ENCODE measurements at regions of chr17 and their contacts with region 1.

Region 1: DNA sequence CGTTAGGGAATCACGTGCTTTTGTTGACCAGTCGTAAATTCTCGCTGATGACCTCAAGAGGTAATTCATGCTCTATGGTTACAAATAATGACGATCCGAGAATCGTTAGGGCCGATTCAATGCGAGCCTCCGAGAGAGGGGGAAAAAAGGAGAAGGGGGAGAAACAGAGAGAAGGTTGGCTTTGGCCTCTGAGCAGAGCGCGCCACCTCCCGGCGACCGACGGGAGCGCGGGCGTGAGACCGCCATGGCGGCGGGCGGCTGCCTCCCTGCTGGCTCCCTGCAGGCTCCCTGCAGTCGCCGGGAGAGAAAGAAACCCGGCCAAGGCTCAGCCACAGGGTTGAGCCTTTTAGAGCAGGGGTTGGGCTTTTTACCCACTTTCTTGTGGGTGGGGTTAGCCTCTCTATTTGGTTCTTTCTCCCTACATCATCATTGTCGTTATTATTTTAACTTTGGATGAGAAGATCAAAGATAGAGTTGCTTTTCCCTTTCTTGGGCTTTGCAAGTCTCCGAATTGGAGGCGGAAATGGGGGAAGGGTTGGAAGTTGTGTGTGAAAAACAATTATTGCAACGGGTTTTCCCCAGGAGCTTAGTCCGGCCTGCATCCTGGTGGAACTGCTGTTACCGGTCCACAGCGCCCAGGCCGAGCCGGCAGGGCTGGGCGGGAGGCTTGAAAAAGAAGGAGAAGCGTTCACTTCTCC is 410 bp upstream of the HOXB5 start:
- DNase-seq: peak; percentile 86
- ATAC-seq: peak; percentile 65
- H3K4me3 Mint-ChIP-seq: peak overlapping the region; percentile 76
- H3K27ac Mint-ChIP-seq: peak overlapping the region; percentile 23
- H3K4me1 Mint-ChIP-seq: peaks cover 44% of the 10 kb centered on the region
- H3K27me3 Mint-ChIP-seq: peaks cover 76% of the 10 kb centered on the region

Region 2: DNA sequence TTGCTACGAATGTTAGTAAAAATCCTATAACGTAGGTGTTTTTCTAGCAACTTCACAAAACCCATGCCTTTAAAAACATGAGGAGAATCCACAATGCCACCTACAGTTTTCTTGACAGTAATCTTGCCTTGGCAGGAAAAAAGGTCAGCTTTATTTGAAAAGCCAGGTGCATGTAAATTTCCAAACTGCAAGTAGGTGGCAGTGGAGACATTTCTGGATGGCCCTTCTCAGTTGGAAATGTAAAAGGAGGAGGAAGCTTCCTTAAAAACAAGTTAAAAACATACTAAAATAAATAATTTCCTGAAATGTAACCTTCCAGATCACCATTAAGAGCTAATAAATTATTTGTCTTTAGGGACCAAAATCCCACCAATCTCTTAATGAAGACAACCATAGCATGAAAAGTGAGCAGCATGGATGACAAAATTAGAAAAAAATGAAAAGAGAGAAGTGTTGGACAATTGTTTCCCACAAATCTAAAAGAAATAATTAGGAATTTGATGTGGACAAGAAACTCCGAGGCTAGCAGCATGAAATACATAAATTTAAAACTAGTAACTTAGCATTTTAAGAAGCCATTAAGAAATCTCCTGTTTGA is 334.2 kb before region 1 on chr17:
- CTCF ChIA-PET with region 1: interaction called, 60 read pairs
- POLR2A ChIA-PET with region 1: no interaction called
- DNase-seq: no peak
- ATAC-seq: no peak
- H3K4me3 Mint-ChIP-seq: no peak overlapping the region
- H3K27ac Mint-ChIP-seq: no peak overlapping the region
- H3K4me1 Mint-ChIP-seq: peaks cover 9% of the 10 kb centered on the region
- H3K27me3 Mint-ChIP-seq: no peaks in the 10 kb centered on the region

Region 3: GRCh38 chr17:48322060-48322459 is 271.9 kb before region 1 on chr17:
- CTCF ChIA-PET with region 1: interaction called, 18 read pairs
- POLR2A ChIA-PET with region 1: no interaction called
- DNase-seq: no peak
- ATAC-seq: no peak
- H3K4me3 Mint-ChIP-seq: no peak overlapping the region
- H3K27ac Mint-ChIP-seq: no peak overlapping the region
- H3K4me1 Mint-ChIP-seq: no peaks in the 10 kb centered on the region
- H3K27me3 Mint-ChIP-seq: no peaks in the 10 kb centered on the region

Region 4: DNA sequence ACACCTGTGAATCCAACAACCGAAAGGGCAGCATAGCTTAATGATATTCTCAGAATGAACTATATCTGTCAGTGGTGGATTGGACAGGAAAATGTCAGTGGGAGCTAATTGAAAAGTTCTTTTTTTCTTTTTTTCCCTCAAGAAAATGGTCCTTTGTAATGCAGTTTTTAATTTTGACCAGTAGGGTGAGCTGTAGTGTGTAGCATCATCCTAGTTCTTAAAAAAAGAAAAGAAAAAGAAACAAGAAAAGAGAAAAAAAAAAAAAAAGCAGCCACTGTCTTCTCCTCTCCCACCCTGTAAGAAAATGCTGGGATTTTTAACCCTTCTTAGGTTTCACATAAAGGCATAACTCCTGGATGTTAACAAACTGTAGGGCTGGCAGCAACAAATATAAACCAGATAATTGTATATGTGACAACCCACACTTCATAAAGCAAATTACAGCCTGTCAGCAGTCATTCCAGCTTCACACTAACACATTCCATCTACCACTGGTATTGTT is 242.1 kb before region 1 on chr17:
- CTCF ChIA-PET with region 1: interaction called, 59 read pairs
- POLR2A ChIA-PET with region 1: interaction called, 3 read pairs
- DNase-seq: no peak
- ATAC-seq: no peak
- H3K4me3 Mint-ChIP-seq: peak overlapping the region; percentile 10
- H3K27ac Mint-ChIP-seq: no peak overlapping the region
- H3K4me1 Mint-ChIP-seq: peaks cover 14% of the 10 kb centered on the region
- H3K27me3 Mint-ChIP-seq: no peaks in the 10 kb centered on the region

Region 5: GRCh38 chr17:48441231-48441711 is 152.7 kb before region 1 on chr17:
- CTCF ChIA-PET with region 1: no interaction called
- POLR2A ChIA-PET with region 1: no interaction called
- DNase-seq: peak; percentile 71
- ATAC-seq: peak; percentile 65
- H3K4me3 Mint-ChIP-seq: peak overlapping the region; percentile 69
- H3K27ac Mint-ChIP-seq: peak overlapping the region; percentile 93
- H3K4me1 Mint-ChIP-seq: peaks cover 95% of the 10 kb centered on the region
- H3K27me3 Mint-ChIP-seq: no peaks in the 10 kb centered on the region

Region 6: DNA sequence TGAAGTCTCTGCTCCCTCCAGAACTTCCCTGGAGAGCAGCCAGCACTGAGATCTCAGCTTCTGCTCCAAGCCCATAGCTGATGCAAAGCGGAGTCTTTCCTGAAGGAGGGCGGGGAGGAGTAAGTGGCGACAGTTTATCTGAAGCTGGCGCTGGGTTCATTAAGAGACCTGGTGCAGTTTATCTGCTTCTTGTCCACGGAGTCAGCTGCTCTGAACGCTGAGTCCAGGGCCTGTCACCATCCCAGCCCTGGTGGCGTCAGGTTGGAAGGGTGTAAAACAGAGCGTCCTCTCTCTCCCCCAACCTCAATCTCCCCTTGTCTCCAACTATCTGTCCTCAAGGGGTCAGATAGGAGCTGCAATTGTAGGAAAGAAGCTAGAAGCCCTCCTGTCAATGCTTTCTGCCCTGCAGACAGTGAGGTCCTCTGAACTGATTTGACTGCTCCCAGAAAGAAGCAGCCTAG is 93.0 kb before region 1 on chr17:
- CTCF ChIA-PET with region 1: interaction called, 13 read pairs
- POLR2A ChIA-PET with region 1: no interaction called
- DNase-seq: no peak
- ATAC-seq: no peak
- H3K4me3 Mint-ChIP-seq: no peak overlapping the region
- H3K27ac Mint-ChIP-seq: no peak overlapping the region
- H3K4me1 Mint-ChIP-seq: peaks cover 19% of the 10 kb centered on the region
- H3K27me3 Mint-ChIP-seq: peaks cover 40% of the 10 kb centered on the region